CD8-positive, alpha-beta T cell (primary cell): ENCODE measurements at regions of chrX and their contacts with region 1.

Region 1: GRCh38 chrX:1537035-1537715 is at the start of gene P2RY8:
- DNase-seq: peak; percentile 65 to 91 (median 82)
- ATAC-seq: peak; percentile 76
- H3K4me3 ChIP-seq: peak within 1 kb of the TSS; percentile 71 to 98
- H3K4me3 Mint-ChIP-seq: peak within 1 kb of the TSS; percentile 98
- H3K27ac ChIP-seq: peak within 1 kb of the TSS; percentile 91 to 92
- H3K27ac Mint-ChIP-seq: peak within 1 kb of the TSS; percentile 98
- H3K4me1 ChIP-seq: peaks cover 15% of the 10 kb centered on the region
- H3K4me1 Mint-ChIP-seq: peaks cover 20% of the 10 kb centered on the region
- H3K27me3 ChIP-seq: no peaks in the 10 kb centered on the region
- H3K27me3 Mint-ChIP-seq: no peaks in the 10 kb centered on the region
- CTCF ChIP-seq: no peak
- total RNA-seq, gene P2RY8: 196 to 197 TPM

Region 2: DNA sequence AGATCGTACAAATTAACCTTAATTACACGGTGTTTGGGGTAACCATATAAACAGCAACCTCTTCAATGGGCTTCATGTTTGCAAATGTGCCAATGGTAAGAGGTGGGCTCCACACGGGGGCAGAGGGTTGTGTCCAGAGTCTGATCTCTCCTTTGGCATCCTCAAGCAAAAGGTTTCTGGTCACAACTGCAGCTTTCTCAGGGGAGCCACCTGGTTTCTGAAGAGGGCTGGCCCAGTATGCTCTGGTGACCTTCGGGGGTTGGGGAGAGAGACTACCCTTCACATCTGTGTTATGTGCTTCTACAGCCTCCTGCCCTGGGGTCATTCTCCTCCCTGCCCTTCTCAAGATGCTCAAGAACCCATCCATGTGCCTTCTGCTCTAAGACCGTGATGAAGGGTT is 584.4 kb before region 1 on chrX:
- CTCF ChIA-PET with region 1: no interaction called
- POLR2A ChIA-PET with region 1: no interaction called
- intact Hi-C with region 1: no loop called
- DNase-seq: peak in 1 of 9 experiments; percentile 13
- ATAC-seq: no peak
- H3K4me3 ChIP-seq: no peak overlapping the region
- H3K4me3 Mint-ChIP-seq: no peak overlapping the region
- H3K27ac ChIP-seq: no peak overlapping the region
- H3K27ac Mint-ChIP-seq: no peak overlapping the region
- H3K4me1 ChIP-seq: no peaks in the 10 kb centered on the region
- H3K4me1 Mint-ChIP-seq: no peaks in the 10 kb centered on the region
- H3K27me3 ChIP-seq: no peaks in the 10 kb centered on the region
- H3K27me3 Mint-ChIP-seq: no peaks in the 10 kb centered on the region
- CTCF ChIP-seq: no peak

Region 3: GRCh38 chrX:1205680-1206611 is 331.2 kb before region 1 on chrX:
- CTCF ChIA-PET with region 1: no interaction called
- POLR2A ChIA-PET with region 1: no interaction called
- intact Hi-C with region 1: no loop called
- DNase-seq: peak in 6 of 9 experiments; percentile 6 to 76 (median 40)
- ATAC-seq: peak; percentile 45
- H3K4me3 ChIP-seq: peak overlapping the region; percentile 43 to 52
- H3K4me3 Mint-ChIP-seq: peak overlapping the region; percentile 77
- H3K27ac ChIP-seq: no peak overlapping the region
- H3K27ac Mint-ChIP-seq: no peak overlapping the region
- H3K4me1 ChIP-seq: peaks cover 20% of the 10 kb centered on the region
- H3K4me1 Mint-ChIP-seq: peaks cover 27% of the 10 kb centered on the region
- H3K27me3 ChIP-seq: peaks cover 0 to 2% of the 10 kb centered on the region in 2 experiments
- H3K27me3 Mint-ChIP-seq: no peaks in the 10 kb centered on the region
- CTCF ChIP-seq: no peak

Region 4: DNA sequence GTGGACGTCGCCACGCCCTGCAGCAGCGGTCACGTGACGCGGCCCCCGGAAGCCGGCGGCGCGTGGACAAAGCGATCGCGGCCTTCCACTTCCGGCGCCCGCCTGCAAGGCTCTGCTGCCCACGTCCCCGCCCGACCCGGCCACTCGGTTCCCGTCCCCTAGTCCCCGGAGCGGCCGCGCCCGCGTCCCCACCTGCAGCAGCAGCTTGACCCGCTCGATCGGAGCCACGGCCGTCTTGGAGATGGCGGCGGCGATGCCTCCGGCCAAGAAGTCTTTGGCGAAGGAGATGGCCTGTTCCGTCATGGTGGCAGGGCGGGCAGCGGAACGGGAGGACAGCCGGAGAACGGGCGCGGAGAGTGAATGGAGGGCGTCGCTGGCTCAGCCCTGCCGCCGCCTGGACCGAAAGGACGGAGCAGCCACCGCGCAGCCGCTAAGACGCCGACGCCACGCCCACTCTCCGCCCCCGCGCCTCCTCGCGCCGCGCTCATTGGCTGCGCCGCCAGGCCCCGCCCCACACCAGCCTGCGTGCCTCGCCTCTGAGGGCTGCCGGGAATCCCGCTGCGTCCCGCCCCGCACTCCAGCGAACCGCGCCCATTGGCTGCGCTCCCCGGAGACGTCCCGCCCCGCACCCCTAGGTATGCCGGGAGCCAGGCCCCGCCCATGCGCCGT is 145.3 kb before region 1 on chrX and contains the start of gene SLC25A6:
- CTCF ChIA-PET with region 1: no interaction called
- POLR2A ChIA-PET with region 1: no interaction called
- intact Hi-C with region 1: loop called (anchors 1 to 5 kb)
- DNase-seq: peak; percentile 99 to 100 (median 99)
- ATAC-seq: peak; percentile 95
- H3K4me3 ChIP-seq: peak within 1 kb of the TSS; percentile 99
- H3K4me3 Mint-ChIP-seq: peak within 1 kb of the TSS; percentile 90
- H3K27ac ChIP-seq: peak within 1 kb of the TSS; percentile 96 to 98
- H3K27ac Mint-ChIP-seq: peak within 1 kb of the TSS; percentile 92
- H3K4me1 ChIP-seq: peaks cover 44% of the 10 kb centered on the region
- H3K4me1 Mint-ChIP-seq: peaks cover 47% of the 10 kb centered on the region
- H3K27me3 ChIP-seq: no peaks in the 10 kb centered on the region
- H3K27me3 Mint-ChIP-seq: no peaks in the 10 kb centered on the region
- CTCF ChIP-seq: no peak
- total RNA-seq, gene SLC25A6: 382 to 404 TPM

Region 5: DNA sequence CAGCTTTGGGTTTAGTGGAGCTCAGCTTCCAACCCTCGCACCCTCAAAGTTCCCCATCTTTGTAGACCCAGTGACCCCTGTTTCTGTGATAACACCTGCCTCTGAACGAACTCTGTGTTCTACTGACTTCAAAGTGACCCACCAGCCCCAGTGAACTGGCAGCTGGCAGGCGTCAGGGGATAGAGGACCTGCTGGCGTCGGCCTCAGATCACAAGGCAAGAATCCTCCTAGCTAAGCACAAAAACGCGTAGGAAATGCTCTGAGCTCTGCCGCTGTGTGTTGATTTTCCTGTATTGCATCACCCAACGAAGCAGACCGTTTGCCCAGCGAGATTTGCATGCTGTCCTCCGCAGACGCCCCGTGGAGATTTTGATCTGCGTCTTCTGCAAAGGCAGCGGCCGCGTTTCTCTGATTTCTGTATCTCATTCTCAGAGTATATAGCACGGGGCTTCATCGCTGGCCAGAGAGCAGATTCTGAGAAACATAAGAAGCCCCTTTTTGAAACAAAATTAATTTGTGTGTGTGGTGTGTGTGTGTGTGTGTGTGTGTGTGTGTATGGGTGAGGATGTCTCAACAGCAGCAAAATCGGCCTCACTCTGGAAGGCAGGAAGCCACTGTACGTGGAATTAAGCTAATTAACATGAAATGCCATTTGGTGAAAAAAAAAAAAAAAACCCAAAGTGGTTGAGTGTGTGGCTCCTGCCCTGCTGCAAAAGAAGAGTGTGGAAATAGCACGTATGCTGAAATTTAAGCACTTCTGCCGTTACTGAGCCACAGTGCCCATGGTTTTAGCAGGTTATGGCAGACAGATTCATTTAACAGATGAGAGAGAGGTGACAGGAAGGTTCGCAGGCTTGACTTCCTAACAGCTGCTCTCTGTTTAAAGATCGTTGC is 55.3 kb before region 1 on chrX:
- CTCF ChIA-PET with region 1: no interaction called
- POLR2A ChIA-PET with region 1: no interaction called
- intact Hi-C with region 1: loop called in 1 of 2 experiments (anchors 5 kb)
- DNase-seq: peak; percentile 54 to 94 (median 76)
- ATAC-seq: peak; percentile 82
- H3K4me3 ChIP-seq: peak overlapping the region; percentile 18 to 32
- H3K4me3 Mint-ChIP-seq: peak overlapping the region; percentile 64
- H3K27ac ChIP-seq: peak overlapping the region; percentile 66 to 91
- H3K27ac Mint-ChIP-seq: peak overlapping the region; percentile 96
- H3K4me1 ChIP-seq: peaks cover 58% of the 10 kb centered on the region
- H3K4me1 Mint-ChIP-seq: peaks cover 63% of the 10 kb centered on the region
- H3K27me3 ChIP-seq: no peaks in the 10 kb centered on the region
- H3K27me3 Mint-ChIP-seq: no peaks in the 10 kb centered on the region
- CTCF ChIP-seq: no peak

Region 6: GRCh38 chrX:1521459-1521956 is 15.7 kb before region 1 on chrX:
- CTCF ChIA-PET with region 1: no interaction called
- POLR2A ChIA-PET with region 1: no interaction called
- intact Hi-C with region 1: loop called in 1 of 2 experiments (anchors 1 kb)
- DNase-seq: peak; percentile 28 to 94 (median 64)
- ATAC-seq: peak; percentile 74
- H3K4me3 ChIP-seq: peak overlapping the region in 1 of 2 experiments; percentile 10
- H3K4me3 Mint-ChIP-seq: peak overlapping the region; percentile 79
- H3K27ac ChIP-seq: peak overlapping the region; percentile 9 to 51
- H3K27ac Mint-ChIP-seq: peak overlapping the region; percentile 90
- H3K4me1 ChIP-seq: peaks cover 32% of the 10 kb centered on the region
- H3K4me1 Mint-ChIP-seq: peaks cover 55% of the 10 kb centered on the region
- H3K27me3 ChIP-seq: no peaks in the 10 kb centered on the region
- H3K27me3 Mint-ChIP-seq: no peaks in the 10 kb centered on the region
- CTCF ChIP-seq: no peak

Region 7: DNA sequence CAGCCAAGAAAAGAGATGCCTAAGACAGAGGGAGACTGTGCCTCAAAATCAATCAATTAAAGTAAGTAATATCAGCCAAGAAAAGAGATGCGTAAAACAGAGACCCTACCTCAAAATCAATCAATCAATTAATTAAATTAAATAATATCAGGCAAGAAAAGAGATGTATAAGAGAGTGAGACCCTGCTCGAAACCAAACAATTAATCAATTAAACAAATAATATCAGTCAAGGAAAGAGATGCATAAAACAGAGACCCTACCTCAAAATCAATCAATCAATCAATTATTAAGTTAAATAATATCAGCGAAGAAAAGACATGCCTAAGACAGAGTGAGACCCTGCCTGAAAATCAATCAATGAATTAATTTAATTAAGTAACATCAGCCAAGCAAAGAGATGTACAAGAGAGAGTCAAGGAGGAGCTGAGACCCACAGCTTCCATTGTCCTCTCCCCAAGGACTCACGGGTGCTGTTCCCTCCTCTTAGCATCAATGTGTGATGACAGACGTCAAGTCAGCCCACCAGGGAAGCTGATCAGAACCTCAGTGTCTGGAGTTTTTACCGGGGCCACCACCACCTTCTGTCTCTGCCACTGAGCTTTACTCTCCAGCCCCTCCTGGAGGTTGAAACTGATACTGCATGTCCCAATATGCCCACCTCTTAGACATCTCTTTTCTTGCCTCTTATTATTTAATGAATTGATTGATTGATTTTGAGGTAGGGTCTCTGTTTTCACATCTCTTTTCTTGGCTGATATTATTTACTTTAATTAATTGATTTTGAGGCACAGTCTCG is 43.8 kb after region 1 on chrX:
- CTCF ChIA-PET with region 1: no interaction called
- POLR2A ChIA-PET with region 1: no interaction called
- intact Hi-C with region 1: loop called (anchors 2 kb)
- DNase-seq: peak; percentile 48 to 85 (median 72)
- ATAC-seq: peak; percentile 92
- H3K4me3 ChIP-seq: no peak overlapping the region
- H3K4me3 Mint-ChIP-seq: no peak overlapping the region
- H3K27ac ChIP-seq: no peak overlapping the region
- H3K27ac Mint-ChIP-seq: no peak overlapping the region
- H3K4me1 ChIP-seq: peaks cover 43% of the 10 kb centered on the region
- H3K4me1 Mint-ChIP-seq: peaks cover 10% of the 10 kb centered on the region
- H3K27me3 ChIP-seq: no peaks in the 10 kb centered on the region
- H3K27me3 Mint-ChIP-seq: no peaks in the 10 kb centered on the region
- CTCF ChIP-seq: peak; percentile 85

Region 8: DNA sequence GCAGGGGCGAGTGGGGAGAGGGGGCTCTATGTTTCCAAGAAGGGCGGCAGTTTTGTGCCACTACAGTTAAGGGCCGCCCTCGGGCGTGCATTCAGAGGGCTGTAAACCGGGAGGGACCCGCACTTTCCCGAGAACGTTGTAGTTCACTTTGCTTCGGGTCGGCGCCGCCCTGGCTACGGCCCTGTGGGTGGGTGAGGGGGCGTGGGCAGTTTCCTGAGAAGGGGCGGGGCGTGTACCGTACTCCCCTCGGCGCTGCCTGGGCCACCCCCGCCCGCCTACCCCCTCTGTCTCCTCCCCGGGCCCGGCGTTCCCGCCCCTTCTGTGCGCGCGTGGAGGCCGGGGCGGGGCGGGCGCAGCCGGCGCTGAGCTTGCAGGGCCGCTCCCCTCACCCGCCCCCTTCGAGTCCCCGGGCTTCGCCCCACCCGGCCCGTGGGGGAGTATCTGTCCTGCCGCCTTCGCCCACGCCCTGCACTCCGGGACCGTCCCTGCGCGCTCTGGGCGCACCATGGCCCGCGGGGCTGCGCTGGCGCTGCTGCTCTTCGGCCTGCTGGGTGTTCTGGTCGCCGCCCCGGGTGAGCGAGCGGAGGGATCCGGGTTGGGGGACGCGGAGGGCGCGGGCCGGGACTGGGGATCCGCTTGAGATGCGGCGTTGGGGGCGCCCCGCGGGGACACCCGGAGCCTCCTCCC is 1153.8 kb after region 1 on chrX and contains the start of gene CD99:
- CTCF ChIA-PET with region 1: no interaction called
- POLR2A ChIA-PET with region 1: no interaction called
- intact Hi-C with region 1: loop called in 1 of 2 experiments (anchors 10 kb)
- DNase-seq: peak; percentile 83 to 96 (median 89)
- ATAC-seq: peak; percentile 93
- H3K4me3 ChIP-seq: peak within 1 kb of the TSS; percentile 80 to 91
- H3K4me3 Mint-ChIP-seq: peak within 1 kb of the TSS; percentile 94
- H3K27ac ChIP-seq: peak within 1 kb of the TSS; percentile 70 to 71
- H3K27ac Mint-ChIP-seq: peak within 1 kb of the TSS; percentile 94
- H3K4me1 ChIP-seq: peaks cover 44% of the 10 kb centered on the region
- H3K4me1 Mint-ChIP-seq: peaks cover 37% of the 10 kb centered on the region
- H3K27me3 ChIP-seq: no peaks in the 10 kb centered on the region
- H3K27me3 Mint-ChIP-seq: no peaks in the 10 kb centered on the region
- CTCF ChIP-seq: no peak
- total RNA-seq, gene CD99: 114 to 120 TPM